Breast epithelium (tissue), 4 donors: ENCODE measurements at regions of chr1 and their contacts with region 1.

Region 1: DNA sequence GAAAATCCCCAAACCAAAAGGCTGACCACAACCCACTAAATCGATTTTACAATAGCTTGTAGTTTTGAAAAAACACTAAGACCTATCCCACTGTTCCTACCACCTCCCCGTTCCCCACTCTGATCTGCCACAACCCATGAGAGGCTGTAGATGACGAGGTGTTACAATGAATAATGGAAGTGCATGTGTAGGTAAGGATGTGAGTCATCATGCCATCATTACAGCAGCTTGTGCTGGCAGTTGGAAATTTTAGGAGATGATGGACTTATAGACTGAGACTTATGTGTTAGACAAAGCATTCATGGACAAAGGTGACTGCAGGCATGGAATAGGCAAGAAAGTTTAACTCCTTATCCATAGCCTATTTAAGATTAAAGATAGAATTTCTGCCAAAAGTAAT is 184.7 kb upstream of the CACYBP start:
- DNase-seq: no peak
- H3K4me3 ChIP-seq: no peak overlapping the region
- H3K27ac ChIP-seq: no peak overlapping the region
- H3K4me1 ChIP-seq: no peaks in the 10 kb centered on the region
- H3K27me3 ChIP-seq: no peaks in the 10 kb centered on the region
- CTCF ChIP-seq: no peak
- POLR2A ChIP-seq: no peak

Region 2: DNA sequence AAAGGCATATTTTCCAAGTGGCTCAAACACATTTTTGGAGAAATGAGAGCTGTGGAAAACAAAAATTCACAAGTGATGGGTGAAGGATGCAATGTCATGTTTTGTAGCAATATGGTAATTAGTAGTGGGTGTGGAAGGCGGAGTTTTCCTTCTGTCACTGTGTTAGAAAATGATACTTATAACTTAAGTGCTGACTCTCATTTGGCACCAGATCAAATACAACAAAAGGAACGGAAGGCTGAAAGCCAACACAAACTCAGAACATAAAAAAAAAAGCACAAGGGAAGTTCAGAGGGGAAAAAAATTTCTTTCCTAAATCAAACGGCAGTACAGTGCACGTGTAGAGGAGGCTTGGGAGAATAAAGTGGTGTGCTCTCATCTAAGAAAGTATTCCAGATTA is 1764.2 kb before region 1 on chr1 and contains the start of gene TNFSF18:
- intact Hi-C with region 1: no loop called
- DNase-seq: no peak
- H3K4me3 ChIP-seq: no peak within 1 kb of the TSS
- H3K27ac ChIP-seq: no peak within 1 kb of the TSS
- H3K4me1 ChIP-seq: no peaks in the 10 kb centered on the region
- H3K27me3 ChIP-seq: no peaks in the 10 kb centered on the region
- CTCF ChIP-seq: no peak
- POLR2A ChIP-seq: no peak
- total RNA-seq, gene TNFSF18: not detected

Region 3: GRCh38 chr1:174314433-174314832 is 500.6 kb before region 1 on chr1:
- intact Hi-C with region 1: no loop called
- DNase-seq: no peak
- H3K4me3 ChIP-seq: no peak overlapping the region
- H3K27ac ChIP-seq: no peak overlapping the region
- H3K4me1 ChIP-seq: no peaks in the 10 kb centered on the region
- H3K27me3 ChIP-seq: no peaks in the 10 kb centered on the region
- CTCF ChIP-seq: no peak
- POLR2A ChIP-seq: no peak

Region 4: DNA sequence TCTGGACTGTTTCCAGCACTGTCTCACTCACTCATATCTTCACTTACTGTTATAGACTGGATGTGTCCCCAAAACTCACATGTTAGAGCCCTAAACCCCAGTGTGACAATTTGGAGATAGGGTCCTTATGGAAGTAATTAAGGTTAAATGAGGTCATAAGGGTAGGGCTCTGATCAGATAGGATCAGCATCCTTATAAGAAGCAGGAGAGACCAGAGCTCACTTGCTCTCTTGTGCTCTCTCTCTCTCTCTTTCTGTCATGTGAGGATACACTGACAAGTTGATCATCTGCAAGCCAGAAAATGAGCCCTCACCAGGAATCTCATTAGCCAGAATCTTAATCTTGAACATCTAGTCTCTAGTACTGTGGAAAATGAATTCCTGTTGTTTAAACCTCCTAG is 905.0 kb after region 1 on chr1:
- intact Hi-C with region 1: loop called (anchors 5 kb)
- DNase-seq: no peak
- H3K4me3 ChIP-seq: no peak overlapping the region
- H3K27ac ChIP-seq: no peak overlapping the region
- H3K4me1 ChIP-seq: no peaks in the 10 kb centered on the region
- H3K27me3 ChIP-seq: peaks cover 0 to 11% of the 10 kb centered on the region in 2 donors
- CTCF ChIP-seq: no peak
- POLR2A ChIP-seq: no peak

Region 5: GRCh38 chr1:176515259-176515692 is 1700.2 kb after region 1 on chr1:
- intact Hi-C with region 1: no loop called
- DNase-seq: peak in 1 of 2 donors; percentile 40
- H3K4me3 ChIP-seq: no peak overlapping the region
- H3K27ac ChIP-seq: no peak overlapping the region
- H3K4me1 ChIP-seq: no peaks in the 10 kb centered on the region
- H3K27me3 ChIP-seq: no peaks in the 10 kb centered on the region
- CTCF ChIP-seq: no peak
- POLR2A ChIP-seq: no peak